ENCODE measurements at regions of chr12 and their contacts with region 1.

Region 1: DNA sequence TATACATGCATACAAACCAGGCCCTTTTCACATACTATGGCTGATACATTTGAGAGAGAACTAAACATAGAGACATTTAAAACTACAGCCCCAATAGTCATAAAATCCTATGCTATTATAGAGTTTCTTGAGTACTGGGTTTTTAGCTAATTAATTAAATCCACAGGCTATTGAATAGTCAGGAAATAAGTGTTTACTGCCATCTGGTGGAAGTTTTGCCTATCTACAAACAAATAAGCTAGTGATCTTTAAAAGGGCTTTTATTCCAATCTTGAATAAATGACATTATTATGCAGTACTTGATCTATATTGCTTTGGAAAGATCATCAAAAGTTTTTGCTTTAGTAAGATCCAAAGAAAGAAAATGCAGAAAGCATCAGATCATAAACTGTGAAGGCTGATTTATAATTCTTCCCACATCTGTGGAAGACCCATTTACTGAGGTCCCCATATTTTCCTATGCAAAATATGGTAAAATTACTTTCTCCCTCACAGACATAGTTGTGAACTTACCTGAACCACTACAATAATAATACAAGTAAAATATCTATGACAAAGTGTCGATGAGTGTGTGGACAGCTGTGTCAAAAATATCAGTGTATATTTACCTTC is 131.3 kb downstream of the ITPR2 start:
- DNase-seq: peak in 1 of 2 experiments; percentile 40
- H3K4me3 ChIP-seq: no peak overlapping the region
- H3K27ac ChIP-seq: no peak overlapping the region
- H3K4me1 ChIP-seq: peaks cover 7% of the 10 kb centered on the region; the same call in 1 of the 2 replicates
- H3K27me3 ChIP-seq: no peaks in the 10 kb centered on the region
- CTCF ChIP-seq: peak; percentile 78

Region 2: DNA sequence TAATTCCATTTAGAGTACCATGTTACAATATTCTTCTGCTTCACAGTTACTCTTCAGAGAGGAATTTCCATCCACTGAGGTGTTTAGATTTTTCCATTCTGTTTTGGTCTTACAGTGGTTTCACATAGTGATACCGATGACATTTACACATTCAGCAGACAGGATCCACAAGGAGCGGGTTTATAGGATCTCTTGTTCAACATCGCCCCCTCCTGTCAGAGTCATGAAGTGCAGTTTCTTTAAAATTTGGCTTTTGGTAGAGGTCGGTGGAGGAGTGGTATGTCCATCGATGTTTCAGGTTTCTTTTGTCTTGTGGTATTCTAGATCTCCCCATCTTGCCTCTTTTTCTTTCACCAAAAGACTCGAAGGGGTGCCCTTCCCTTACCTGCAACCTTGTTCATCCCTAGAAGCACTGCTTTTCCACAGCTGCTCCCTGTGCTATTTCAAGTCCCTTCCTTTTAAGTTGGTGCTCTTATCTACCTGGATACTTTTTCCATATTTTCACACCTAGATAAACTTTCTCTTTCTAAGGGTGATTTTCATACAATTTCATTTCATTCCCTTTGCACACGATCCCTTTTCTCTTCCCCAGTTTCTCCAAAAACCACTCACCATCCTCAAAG is 50.0 kb before region 1 on chr12:
- CTCF ChIA-PET with region 1: interaction called, 3 read pairs
- POLR2A ChIA-PET with region 1: no interaction called
- intact Hi-C with region 1: loop called (anchors 5 kb)
- DNase-seq: peak; percentile 67 to 77
- H3K4me3 ChIP-seq: no peak overlapping the region
- H3K27ac ChIP-seq: no peak overlapping the region
- H3K4me1 ChIP-seq: peaks cover 12% of the 10 kb centered on the region; the same call in 1 of the 2 replicates
- H3K27me3 ChIP-seq: no peaks in the 10 kb centered on the region
- CTCF ChIP-seq: peak; percentile 97

Region 3: GRCh38 chr12:26832822-26833742 is 131.4 kb after region 1 on chr12 and contains the start of gene ITPR2:
- CTCF ChIA-PET with region 1: interaction called, 6 read pairs
- POLR2A ChIA-PET with region 1: interaction called, 4 read pairs
- intact Hi-C with region 1: loop called (anchors 5 kb)
- DNase-seq: peak; percentile 80 to 99
- H3K4me3 ChIP-seq: peak within 1 kb of the TSS; percentile 83
- H3K27ac ChIP-seq: peak within 1 kb of the TSS; percentile 61
- H3K4me1 ChIP-seq: peaks cover 14% of the 10 kb centered on the region
- H3K27me3 ChIP-seq: no peaks in the 10 kb centered on the region
- CTCF ChIP-seq: peak; percentile 51; the same call in 1 of the 2 replicates
- total RNA-seq, gene ITPR2: 16.2 and 26.0 TPM in 2 replicates

Region 4: GRCh38 chr12:26884765-26885576 is 183.3 kb after region 1 on chr12:
- CTCF ChIA-PET with region 1: no interaction called
- POLR2A ChIA-PET with region 1: no interaction called
- intact Hi-C with region 1: loop called (anchors 10 kb)
- DNase-seq: peak; percentile 81 to 90
- H3K4me3 ChIP-seq: no peak overlapping the region
- H3K27ac ChIP-seq: no peak overlapping the region
- H3K4me1 ChIP-seq: no peaks in the 10 kb centered on the region
- H3K27me3 ChIP-seq: no peaks in the 10 kb centered on the region
- CTCF ChIP-seq: peak; percentile 95